ENCODE measurements at regions of chr4 and their contacts with region 1.

Region 1: DNA sequence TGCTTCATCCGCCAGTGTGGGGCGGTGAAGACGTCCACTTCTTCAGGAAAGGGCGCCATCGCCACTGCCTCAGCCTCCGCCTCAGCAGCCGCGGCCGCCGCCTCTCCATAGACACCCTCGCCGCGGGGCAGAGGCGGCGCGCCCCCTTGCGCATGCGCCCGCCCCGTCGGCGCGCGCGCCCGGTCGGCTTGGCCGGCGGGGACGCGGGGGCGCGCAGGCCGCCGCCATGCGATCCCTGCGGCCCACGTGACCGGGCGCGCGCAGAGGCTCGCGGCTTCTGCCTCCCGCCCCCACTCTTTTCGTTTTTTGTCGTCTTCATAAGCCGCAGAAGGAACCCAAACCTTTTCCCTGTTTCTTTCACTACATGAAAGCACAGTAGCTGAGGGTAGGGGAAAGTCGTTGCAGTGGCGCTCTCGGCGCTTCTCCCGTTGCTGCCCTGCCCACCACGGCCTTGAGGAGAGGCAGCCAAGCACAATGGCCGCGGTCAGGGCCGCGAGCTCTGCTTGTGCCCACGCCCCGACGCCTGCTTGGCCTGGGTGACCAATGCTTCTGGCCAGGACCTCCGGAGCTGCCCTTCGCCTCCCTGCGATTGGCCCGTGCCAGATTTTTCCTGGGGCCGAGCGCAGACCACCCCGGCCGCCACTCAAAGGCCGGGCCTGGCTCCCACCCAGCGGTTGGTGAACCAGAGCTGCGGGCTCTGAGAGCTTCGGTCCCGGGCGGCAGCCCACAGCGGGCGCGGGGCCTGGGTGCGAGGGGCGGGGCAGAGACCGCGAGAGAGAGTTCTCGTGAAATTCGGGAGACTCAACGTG is at the start of gene FBXL5:
- DNase-seq: peak; percentile 65 to 88
- H3K4me3 ChIP-seq: peak within 1 kb of the TSS; percentile 65
- H3K4me3 Mint-ChIP-seq: peak within 1 kb of the TSS; percentile 95
- H3K27ac Mint-ChIP-seq: peak within 1 kb of the TSS; percentile 99
- H3K4me1 ChIP-seq: peaks cover 6% of the 10 kb centered on the region
- H3K4me1 Mint-ChIP-seq: peaks cover 6% of the 10 kb centered on the region
- H3K27me3 ChIP-seq: no peaks in the 10 kb centered on the region
- H3K27me3 Mint-ChIP-seq: no peaks in the 10 kb centered on the region
- CTCF ChIP-seq: no peak
- total RNA-seq, gene FBXL5: 29.1 and 32.7 TPM in 2 replicates

Region 2: GRCh38 chr4:15231265-15232091 is 424.0 kb before region 1 on chr4:
- CTCF ChIA-PET with region 1: no interaction called
- POLR2A ChIA-PET with region 1: no interaction called
- intact Hi-C with region 1: loop called (anchors 10 kb)
- DNase-seq: peak; percentile 67 to 74
- H3K4me3 ChIP-seq: no peak overlapping the region
- H3K4me3 Mint-ChIP-seq: no peak overlapping the region
- H3K27ac Mint-ChIP-seq: no peak overlapping the region
- H3K4me1 ChIP-seq: no peaks in the 10 kb centered on the region
- H3K4me1 Mint-ChIP-seq: no peaks in the 10 kb centered on the region
- H3K27me3 ChIP-seq: no peaks in the 10 kb centered on the region
- H3K27me3 Mint-ChIP-seq: peaks cover 5% of the 10 kb centered on the region
- CTCF ChIP-seq: peak; percentile 46 to 52

Region 3: GRCh38 chr4:15577508-15577907 is 77.9 kb before region 1 on chr4:
- CTCF ChIA-PET with region 1: no interaction called
- POLR2A ChIA-PET with region 1: no interaction called
- intact Hi-C with region 1: no loop called
- DNase-seq: no peak
- H3K4me3 ChIP-seq: no peak overlapping the region
- H3K4me3 Mint-ChIP-seq: no peak overlapping the region
- H3K27ac Mint-ChIP-seq: no peak overlapping the region
- H3K4me1 ChIP-seq: peaks cover 10% of the 10 kb centered on the region
- H3K4me1 Mint-ChIP-seq: peaks cover 7% of the 10 kb centered on the region
- H3K27me3 ChIP-seq: no peaks in the 10 kb centered on the region
- H3K27me3 Mint-ChIP-seq: no peaks in the 10 kb centered on the region
- CTCF ChIP-seq: no peak

Region 4: GRCh38 chr4:15681207-15682015 is 26.0 kb after region 1 on chr4 and contains the start of gene FAM200B:
- CTCF ChIA-PET with region 1: interaction called, 3 read pairs
- POLR2A ChIA-PET with region 1: interaction called, 6 read pairs
- intact Hi-C with region 1: loop called (anchors 1 kb)
- DNase-seq: peak; percentile 99 to 100
- H3K4me3 ChIP-seq: peak within 1 kb of the TSS; percentile 72
- H3K4me3 Mint-ChIP-seq: peak within 1 kb of the TSS; percentile 95
- H3K27ac Mint-ChIP-seq: peak within 1 kb of the TSS; percentile 97
- H3K4me1 ChIP-seq: peaks cover 36% of the 10 kb centered on the region
- H3K4me1 Mint-ChIP-seq: peaks cover 36% of the 10 kb centered on the region
- H3K27me3 ChIP-seq: no peaks in the 10 kb centered on the region
- H3K27me3 Mint-ChIP-seq: no peaks in the 10 kb centered on the region
- CTCF ChIP-seq: no peak
- total RNA-seq, gene FAM200B: 15.5 and 16.6 TPM in 2 replicates

Region 5: GRCh38 chr4:15756361-15756861 is 101.0 kb after region 1 on chr4:
- CTCF ChIA-PET with region 1: no interaction called
- POLR2A ChIA-PET with region 1: no interaction called
- intact Hi-C with region 1: no loop called
- DNase-seq: peak in 1 of 2 experiments; percentile 25
- H3K4me3 ChIP-seq: no peak overlapping the region
- H3K4me3 Mint-ChIP-seq: no peak overlapping the region
- H3K27ac Mint-ChIP-seq: no peak overlapping the region
- H3K4me1 ChIP-seq: no peaks in the 10 kb centered on the region
- H3K4me1 Mint-ChIP-seq: no peaks in the 10 kb centered on the region
- H3K27me3 ChIP-seq: no peaks in the 10 kb centered on the region
- H3K27me3 Mint-ChIP-seq: peaks cover 5% of the 10 kb centered on the region
- CTCF ChIP-seq: peak in 1 of 2 experiments; percentile 17

Measured in Caco-2 (cell line).